ENCODE measurements at regions of chr11 and their contacts with region 1.

Region 1: DNA sequence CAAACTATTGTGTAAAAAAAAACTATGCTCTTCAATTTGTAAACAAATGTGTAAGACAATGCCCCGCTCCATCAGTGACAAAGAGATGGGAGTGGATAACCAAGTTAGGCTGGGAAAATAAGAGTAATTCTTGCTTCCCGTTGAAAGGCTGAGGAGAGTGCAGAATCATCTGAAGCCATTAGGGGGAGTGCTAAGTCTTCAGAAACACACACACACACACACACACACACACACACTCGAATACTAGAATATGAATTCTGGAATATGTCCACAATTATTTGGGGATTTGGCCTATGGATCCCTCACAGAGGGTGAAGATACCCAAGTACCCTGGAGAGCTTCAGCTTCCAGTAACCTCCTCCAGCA is 27.8 kb upstream of the ROBO3 start:
- DNase-seq: no peak
- H3K4me3 Mint-ChIP-seq: no peak overlapping the region
- H3K27ac Mint-ChIP-seq: no peak overlapping the region
- H3K4me1 Mint-ChIP-seq: peaks cover 21% of the 10 kb centered on the region
- H3K27me3 Mint-ChIP-seq: peaks cover 60% of the 10 kb centered on the region

Region 2: GRCh38 chr11:124644426-124645280 is 192.8 kb before region 1 on chr11:
- CTCF ChIA-PET with region 1: interaction called, 30 read pairs
- POLR2A ChIA-PET with region 1: no interaction called
- DNase-seq: peak; percentile 22
- H3K4me3 Mint-ChIP-seq: no peak overlapping the region
- H3K27ac Mint-ChIP-seq: no peak overlapping the region
- H3K4me1 Mint-ChIP-seq: no peaks in the 10 kb centered on the region
- H3K27me3 Mint-ChIP-seq: no peaks in the 10 kb centered on the region

Region 3: GRCh38 chr11:124663861-124664260 is 173.6 kb before region 1 on chr11:
- CTCF ChIA-PET with region 1: interaction called, 51 read pairs
- POLR2A ChIA-PET with region 1: interaction called, 13 read pairs
- DNase-seq: no peak
- H3K4me3 Mint-ChIP-seq: no peak overlapping the region
- H3K27ac Mint-ChIP-seq: no peak overlapping the region
- H3K4me1 Mint-ChIP-seq: no peaks in the 10 kb centered on the region
- H3K27me3 Mint-ChIP-seq: no peaks in the 10 kb centered on the region

Region 4: DNA sequence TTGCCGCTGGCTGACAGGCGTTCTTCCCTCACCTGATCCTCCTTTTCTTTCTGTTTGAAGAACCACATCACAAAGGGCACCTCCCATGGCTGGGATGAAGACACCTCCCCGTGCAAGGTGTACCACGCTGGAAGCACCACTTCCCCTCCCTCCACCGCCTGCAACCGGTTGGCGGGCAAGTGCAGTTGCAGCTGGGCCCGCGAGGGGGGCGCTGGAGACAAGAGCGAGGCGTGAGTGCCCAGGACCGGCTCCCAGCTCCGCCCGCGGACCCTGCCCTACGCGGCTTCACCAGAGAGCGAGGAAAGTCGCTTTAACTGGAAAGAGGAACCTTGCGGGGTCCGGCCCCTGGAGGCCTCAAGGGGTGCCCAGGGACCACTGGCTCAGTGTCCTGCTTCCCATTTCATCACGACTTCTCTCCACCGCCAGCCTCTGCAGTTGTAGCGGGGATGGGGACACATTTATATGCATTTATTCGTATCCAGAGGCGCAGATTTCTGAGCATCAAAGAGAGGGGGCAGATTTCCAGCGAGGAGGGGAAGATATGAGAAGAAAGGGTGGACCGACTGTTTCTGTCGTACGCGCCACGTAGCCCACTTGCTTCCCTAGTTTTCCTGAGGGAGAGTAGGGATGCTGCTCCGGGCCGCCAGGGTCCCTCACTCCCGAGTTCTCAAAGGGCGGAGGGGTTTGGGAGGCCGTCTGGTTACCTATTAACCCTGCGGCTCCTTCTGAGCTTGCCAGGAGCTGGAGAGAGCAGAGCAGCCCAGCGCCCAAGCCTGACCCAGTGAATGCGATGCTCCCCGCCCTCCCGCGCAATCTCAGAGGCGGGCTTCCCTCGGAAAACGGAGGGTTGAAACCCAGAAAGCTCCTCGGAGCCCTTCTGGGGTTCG is 78.9 kb before region 1 on chr11:
- CTCF ChIA-PET with region 1: interaction called, 15 read pairs
- POLR2A ChIA-PET with region 1: no interaction called
- DNase-seq: peak; percentile 73
- H3K4me3 Mint-ChIP-seq: peak overlapping the region; percentile 28
- H3K27ac Mint-ChIP-seq: no peak overlapping the region
- H3K4me1 Mint-ChIP-seq: peaks cover 23% of the 10 kb centered on the region
- H3K27me3 Mint-ChIP-seq: peaks cover 57% of the 10 kb centered on the region

Region 5: GRCh38 chr11:124793466-124794278 is 43.8 kb before region 1 on chr11:
- CTCF ChIA-PET with region 1: interaction called, 29 read pairs
- POLR2A ChIA-PET with region 1: interaction called, 3 read pairs
- DNase-seq: no peak
- H3K4me3 Mint-ChIP-seq: no peak overlapping the region
- H3K27ac Mint-ChIP-seq: no peak overlapping the region
- H3K4me1 Mint-ChIP-seq: peaks cover 41% of the 10 kb centered on the region
- H3K27me3 Mint-ChIP-seq: no peaks in the 10 kb centered on the region

Region 6: GRCh38 chr11:124800226-124800929 is 37.1 kb before region 1 on chr11 and contains the start of gene MSANTD2:
- CTCF ChIA-PET with region 1: interaction called, 29 read pairs
- POLR2A ChIA-PET with region 1: interaction called, 6 read pairs
- DNase-seq: peak; percentile 86
- H3K4me3 Mint-ChIP-seq: peak within 1 kb of the TSS; percentile 88
- H3K27ac Mint-ChIP-seq: peak within 1 kb of the TSS; percentile 89
- H3K4me1 Mint-ChIP-seq: peaks cover 38% of the 10 kb centered on the region
- H3K27me3 Mint-ChIP-seq: peaks cover 2% of the 10 kb centered on the region
- total RNA-seq, gene MSANTD2: 9.4 to 10.4 TPM

Region 7: GRCh38 chr11:124812876-124813275 is 24.6 kb before region 1 on chr11:
- CTCF ChIA-PET with region 1: interaction called, 11 read pairs
- POLR2A ChIA-PET with region 1: no interaction called
- DNase-seq: no peak
- H3K4me3 Mint-ChIP-seq: no peak overlapping the region
- H3K27ac Mint-ChIP-seq: no peak overlapping the region
- H3K4me1 Mint-ChIP-seq: peaks cover 4% of the 10 kb centered on the region
- H3K27me3 Mint-ChIP-seq: peaks cover 45% of the 10 kb centered on the region

Region 8: GRCh38 chr11:124915541-124916369 is 78.3 kb after region 1 on chr11:
- CTCF ChIA-PET with region 1: no interaction called
- POLR2A ChIA-PET with region 1: no interaction called
- DNase-seq: no peak
- H3K4me3 Mint-ChIP-seq: no peak overlapping the region
- H3K27ac Mint-ChIP-seq: no peak overlapping the region
- H3K4me1 Mint-ChIP-seq: peaks cover 2% of the 10 kb centered on the region
- H3K27me3 Mint-ChIP-seq: peaks cover 19% of the 10 kb centered on the region

Measured in activated CD4-positive, alpha-beta memory T cell treated with anti-CD3 and anti-CD28 coated beads, Interleukin-2, amount 10 ng/mL, durations not matched to agents 7 days and 5 days (primary cell).